ENCODE measurements at regions of chr1 and their contacts with region 1.

Region 1: GRCh38 chr1:206784471-206784903 is 12.2 kb upstream of the IL10 start:
- DNase-seq: peak; percentile 94
- ATAC-seq: peak; percentile 84
- H3K4me3 Mint-ChIP-seq: peak overlapping the region; percentile 35
- H3K27ac Mint-ChIP-seq: peak overlapping the region; percentile 86
- H3K4me1 Mint-ChIP-seq: peaks cover 66% of the 10 kb centered on the region
- H3K27me3 Mint-ChIP-seq: peaks cover 15% of the 10 kb centered on the region

Region 2: GRCh38 chr1:206766251-206766856 is 18.1 kb before region 1 on chr1:
- CTCF ChIA-PET with region 1: interaction called, 19 read pairs
- POLR2A ChIA-PET with region 1: interaction called, 4 read pairs
- DNase-seq: peak; percentile 85
- ATAC-seq: peak; percentile 80
- H3K4me3 Mint-ChIP-seq: peak overlapping the region; percentile 61
- H3K27ac Mint-ChIP-seq: peak overlapping the region; percentile 68
- H3K4me1 Mint-ChIP-seq: peaks cover 70% of the 10 kb centered on the region
- H3K27me3 Mint-ChIP-seq: peaks cover 19% of the 10 kb centered on the region

Region 3: DNA sequence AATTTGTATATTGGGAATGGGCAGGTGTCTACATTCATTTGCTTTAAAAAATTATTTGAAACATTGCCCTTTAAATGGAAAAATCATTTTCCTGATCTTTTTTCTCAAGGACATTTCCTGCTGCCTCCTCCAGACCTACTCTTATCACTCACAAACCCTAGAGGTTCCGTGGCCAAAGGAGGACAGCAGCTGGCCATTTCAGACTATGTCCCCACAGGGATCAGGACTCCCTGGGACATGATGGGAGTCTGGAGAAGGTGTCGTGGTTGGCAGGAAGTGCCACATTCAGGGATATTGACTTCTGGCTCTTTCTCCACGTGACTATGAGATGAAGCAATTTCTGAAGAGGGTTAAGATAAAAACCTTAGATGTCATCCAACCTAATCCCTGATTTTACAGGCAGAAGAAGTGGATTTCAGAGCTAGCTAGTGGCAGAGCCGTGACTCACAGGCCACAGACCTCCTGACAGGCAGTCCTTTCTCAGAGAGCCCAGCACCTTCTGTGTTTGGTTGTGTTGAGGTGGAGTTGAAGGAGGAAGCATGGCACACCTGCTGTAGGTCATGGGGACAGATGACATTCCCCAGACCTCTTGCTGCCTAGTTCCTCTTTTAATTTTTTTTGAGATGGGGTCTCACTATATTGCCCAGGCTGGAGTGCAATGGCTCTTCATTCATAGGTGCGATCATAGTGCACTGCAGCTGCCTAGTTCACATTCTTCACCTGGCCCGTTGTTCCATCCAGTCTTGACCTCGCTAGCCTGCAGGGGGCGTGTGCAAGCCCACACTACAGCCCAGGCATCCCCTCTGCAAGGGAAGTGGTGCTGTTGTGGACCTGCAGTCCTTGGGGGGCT is 13.3 kb after region 1 on chr1:
- CTCF ChIA-PET with region 1: interaction called, 30 read pairs
- POLR2A ChIA-PET with region 1: interaction called, 3 read pairs
- DNase-seq: peak; percentile 45
- ATAC-seq: no peak
- H3K4me3 Mint-ChIP-seq: no peak overlapping the region
- H3K27ac Mint-ChIP-seq: no peak overlapping the region
- H3K4me1 Mint-ChIP-seq: peaks cover 51% of the 10 kb centered on the region
- H3K27me3 Mint-ChIP-seq: peaks cover 34% of the 10 kb centered on the region

Region 4: GRCh38 chr1:206816390-206817287 is 32.2 kb after region 1 on chr1:
- CTCF ChIA-PET with region 1: no interaction called
- POLR2A ChIA-PET with region 1: no interaction called
- DNase-seq: peak; percentile 55
- ATAC-seq: peak; percentile 92
- H3K4me3 Mint-ChIP-seq: peak overlapping the region; percentile 13
- H3K27ac Mint-ChIP-seq: peak overlapping the region; percentile 89
- H3K4me1 Mint-ChIP-seq: peaks cover 44% of the 10 kb centered on the region
- H3K27me3 Mint-ChIP-seq: no peaks in the 10 kb centered on the region

Region 5: GRCh38 chr1:206839857-206840256 is 55.4 kb after region 1 on chr1:
- CTCF ChIA-PET with region 1: no interaction called
- POLR2A ChIA-PET with region 1: no interaction called
- DNase-seq: no peak
- ATAC-seq: no peak
- H3K4me3 Mint-ChIP-seq: no peak overlapping the region
- H3K27ac Mint-ChIP-seq: no peak overlapping the region
- H3K4me1 Mint-ChIP-seq: peaks cover 5% of the 10 kb centered on the region
- H3K27me3 Mint-ChIP-seq: peaks cover 25% of the 10 kb centered on the region